ENCODE measurements at regions of chr4 and their contacts with region 1.

Region 1: DNA sequence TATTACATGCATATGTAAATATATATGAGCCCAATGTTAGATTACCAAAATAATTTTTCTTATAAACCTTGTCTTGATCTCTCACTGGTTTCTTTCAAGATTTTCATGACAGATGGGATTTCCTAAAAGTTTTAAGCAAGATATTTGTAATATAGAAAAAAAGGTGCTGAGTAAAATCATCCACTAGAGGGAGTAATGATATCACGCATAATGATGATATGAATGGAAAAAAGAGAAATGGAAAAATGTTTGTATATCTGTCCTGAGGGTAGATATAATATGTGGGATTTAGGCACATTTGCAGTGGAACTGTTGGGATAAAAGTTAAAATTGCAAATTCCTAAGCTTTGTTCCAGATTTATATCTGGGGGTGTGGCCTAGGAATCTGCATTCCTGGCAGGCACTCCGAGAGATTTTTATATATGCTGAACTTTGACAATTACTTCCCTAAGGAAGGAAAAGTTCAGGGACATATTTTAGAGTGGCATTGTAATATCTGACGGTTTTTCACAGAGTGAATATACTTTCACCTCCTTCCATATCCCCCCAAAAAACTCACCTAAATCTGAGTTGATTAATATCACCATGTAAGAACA is 60.5 kb downstream of the TMA16 start:
- DNase-seq: no peak
- H3K4me3 ChIP-seq: no peak overlapping the region
- H3K27ac ChIP-seq: no peak overlapping the region
- H3K4me1 ChIP-seq: no peaks in the 10 kb centered on the region
- H3K27me3 ChIP-seq: no peaks in the 10 kb centered on the region
- CTCF ChIP-seq: peak; percentile 77

Region 2: GRCh38 chr4:163736876-163737275 is 181.9 kb after region 1 on chr4:
- CTCF ChIA-PET with region 1: interaction called, 16 read pairs
- POLR2A ChIA-PET with region 1: no interaction called
- intact Hi-C with region 1: no loop called
- DNase-seq: no peak
- H3K4me3 ChIP-seq: no peak overlapping the region
- H3K27ac ChIP-seq: no peak overlapping the region
- H3K4me1 ChIP-seq: no peaks in the 10 kb centered on the region
- H3K27me3 ChIP-seq: no peaks in the 10 kb centered on the region
- CTCF ChIP-seq: no peak

Region 3: GRCh38 chr4:164012396-164013027 is 457.5 kb after region 1 on chr4:
- CTCF ChIA-PET with region 1: no interaction called
- POLR2A ChIA-PET with region 1: no interaction called
- intact Hi-C with region 1: loop called (anchors 1 kb)
- DNase-seq: no peak
- H3K4me3 ChIP-seq: no peak overlapping the region
- H3K27ac ChIP-seq: no peak overlapping the region
- H3K4me1 ChIP-seq: no peaks in the 10 kb centered on the region
- H3K27me3 ChIP-seq: no peaks in the 10 kb centered on the region
- CTCF ChIP-seq: peak; percentile 53; the same call in 1 of the 2 replicates

Region 4: GRCh38 chr4:164731827-164732474 is 1177.0 kb after region 1 on chr4:
- CTCF ChIA-PET with region 1: interaction called, 8 read pairs
- POLR2A ChIA-PET with region 1: no interaction called
- intact Hi-C with region 1: loop called (anchors 1 kb)
- DNase-seq: peak in 1 of 2 experiments; percentile 56
- H3K4me3 ChIP-seq: no peak overlapping the region
- H3K27ac ChIP-seq: no peak overlapping the region
- H3K4me1 ChIP-seq: no peaks in the 10 kb centered on the region
- H3K27me3 ChIP-seq: no peaks in the 10 kb centered on the region
- CTCF ChIP-seq: peak; percentile 84

Region 5: DNA sequence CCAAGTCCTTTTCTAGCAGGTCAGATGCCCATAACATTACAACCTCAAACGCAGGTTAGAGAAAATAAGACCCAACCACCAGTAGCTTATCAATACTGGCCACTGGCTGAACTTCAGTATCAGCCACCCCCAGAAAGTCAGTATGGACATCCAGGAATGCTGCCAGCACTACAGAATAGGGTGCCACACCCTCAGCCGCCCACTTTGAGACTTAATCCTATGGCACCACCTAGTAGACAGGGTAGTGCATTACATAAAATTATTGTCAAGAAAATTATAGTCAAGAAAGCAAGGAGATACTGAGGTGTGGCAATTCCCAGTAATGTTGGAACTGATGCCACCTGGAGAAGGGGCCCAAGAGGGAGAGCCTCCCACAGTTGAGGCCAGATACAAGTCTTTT is 1442.4 kb after region 1 on chr4:
- CTCF ChIA-PET with region 1: no interaction called
- POLR2A ChIA-PET with region 1: no interaction called
- intact Hi-C with region 1: loop called (anchors 1 kb)
- DNase-seq: no peak
- H3K4me3 ChIP-seq: no peak overlapping the region
- H3K27ac ChIP-seq: no peak overlapping the region
- H3K4me1 ChIP-seq: no peaks in the 10 kb centered on the region
- H3K27me3 ChIP-seq: peaks cover 7% of the 10 kb centered on the region; the same call in 1 of the 2 replicates
- CTCF ChIP-seq: peak; percentile 41; the same call in 1 of the 2 replicates

Measured in PC-9 (cell line).